Left cardiac atrium (tissue), 4 donors: ENCODE measurements at regions of chr15 and their contacts with region 1.

Region 1: DNA sequence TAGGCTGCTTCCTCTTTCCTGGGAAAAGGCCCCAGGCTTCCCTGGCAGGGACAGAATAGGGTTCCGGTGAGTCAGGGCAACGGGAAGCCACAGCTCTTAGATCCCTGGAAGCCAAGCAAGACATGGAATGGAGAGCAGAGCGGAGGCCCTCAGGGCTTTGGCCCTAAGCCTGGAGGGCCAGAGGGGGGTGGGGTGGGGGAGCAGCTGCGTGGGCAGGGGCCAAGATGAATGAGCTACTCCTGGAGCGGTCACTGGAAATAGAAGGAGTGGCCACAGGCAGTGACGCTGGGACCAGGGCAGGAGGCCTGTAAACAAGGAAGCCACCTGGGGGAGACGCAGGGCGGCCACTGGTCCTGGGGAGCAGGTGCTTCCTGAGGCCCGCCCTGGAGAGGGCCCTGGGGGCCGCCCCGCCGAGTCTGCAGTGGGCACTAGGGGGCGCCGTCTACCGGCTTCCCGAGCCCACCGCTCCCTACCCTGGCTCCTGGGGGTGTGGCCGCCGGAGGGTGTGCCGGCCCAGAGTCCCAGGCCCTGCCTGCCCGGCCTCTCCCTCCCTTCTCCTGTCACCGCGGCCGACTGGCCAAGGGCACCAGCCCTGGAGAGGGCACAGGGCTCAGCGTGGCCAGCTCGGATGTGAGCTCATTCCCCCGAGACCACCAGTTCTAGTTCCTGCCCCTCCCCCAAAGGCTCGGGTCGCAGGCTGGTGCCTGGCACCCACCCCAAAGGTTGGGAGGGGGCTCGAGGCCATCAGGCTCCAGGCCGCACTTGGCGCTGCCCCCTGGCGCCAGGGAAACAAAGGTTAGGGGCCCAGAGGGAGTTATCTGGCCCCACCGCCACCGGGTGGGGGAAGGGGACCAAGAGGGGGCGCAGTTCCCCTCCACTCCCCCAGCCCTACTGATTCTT is 12.1 kb downstream of the VPS18 start:
- DNase-seq: peak; percentile 91
- ATAC-seq: peak; percentile 80 to 85

Region 2: DNA sequence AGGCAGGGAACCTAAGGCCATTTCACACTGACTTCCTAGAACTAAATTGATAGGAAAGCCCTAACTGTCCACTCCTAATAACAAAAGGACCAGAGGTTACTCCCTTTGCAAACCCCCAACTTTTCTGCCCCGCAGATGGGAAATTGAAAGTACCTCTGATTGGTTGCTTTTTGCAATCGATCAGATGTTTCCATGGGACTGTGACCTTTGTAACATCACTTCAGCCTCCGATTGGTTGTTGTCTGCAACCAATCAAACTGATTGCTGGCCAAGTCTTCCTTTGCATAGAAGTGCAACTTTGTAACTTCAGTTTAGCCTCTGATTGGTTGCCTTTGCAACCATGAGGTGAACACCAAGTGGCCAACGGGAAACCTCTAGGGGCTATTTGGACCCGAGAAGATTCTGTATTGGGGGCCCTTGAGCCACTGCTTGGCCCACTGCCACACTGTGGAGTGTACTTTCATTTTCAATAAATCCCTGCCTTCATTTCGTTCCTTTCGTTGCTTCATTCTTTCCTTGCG is 323.6 kb before region 1 on chr15:
- intact Hi-C with region 1: no loop called
- DNase-seq: no peak
- ATAC-seq: peak in 1 of 2 donors; percentile 59

Region 3: GRCh38 chr15:40941528-40942336 is 35.4 kb after region 1 on chr15:
- intact Hi-C with region 1: loop called in 1 of 2 experiments (anchors 5 kb)
- DNase-seq: peak; percentile 85
- ATAC-seq: peak; percentile 84 to 85

Region 4: DNA sequence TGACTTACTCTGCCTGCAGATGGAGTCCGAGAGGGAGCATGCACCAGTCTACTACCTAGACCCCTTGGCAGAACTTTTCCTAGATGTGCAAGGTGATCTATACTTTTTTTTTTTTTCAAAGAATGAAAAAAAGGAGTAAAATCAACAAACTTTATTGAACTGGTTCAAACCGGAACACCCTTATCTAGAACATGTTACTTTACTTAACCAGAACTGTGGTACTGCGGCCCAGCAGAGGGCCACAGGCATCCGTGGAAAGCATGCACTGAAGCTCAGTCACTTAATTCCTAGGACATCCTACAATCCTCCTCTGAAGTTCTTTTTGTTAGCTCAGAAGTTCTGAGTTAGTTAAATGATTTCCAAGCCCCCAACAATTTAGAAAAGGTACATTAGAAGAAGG is 68.5 kb after region 1 on chr15:
- intact Hi-C with region 1: no loop called
- DNase-seq: no peak
- ATAC-seq: no peak

Region 5: DNA sequence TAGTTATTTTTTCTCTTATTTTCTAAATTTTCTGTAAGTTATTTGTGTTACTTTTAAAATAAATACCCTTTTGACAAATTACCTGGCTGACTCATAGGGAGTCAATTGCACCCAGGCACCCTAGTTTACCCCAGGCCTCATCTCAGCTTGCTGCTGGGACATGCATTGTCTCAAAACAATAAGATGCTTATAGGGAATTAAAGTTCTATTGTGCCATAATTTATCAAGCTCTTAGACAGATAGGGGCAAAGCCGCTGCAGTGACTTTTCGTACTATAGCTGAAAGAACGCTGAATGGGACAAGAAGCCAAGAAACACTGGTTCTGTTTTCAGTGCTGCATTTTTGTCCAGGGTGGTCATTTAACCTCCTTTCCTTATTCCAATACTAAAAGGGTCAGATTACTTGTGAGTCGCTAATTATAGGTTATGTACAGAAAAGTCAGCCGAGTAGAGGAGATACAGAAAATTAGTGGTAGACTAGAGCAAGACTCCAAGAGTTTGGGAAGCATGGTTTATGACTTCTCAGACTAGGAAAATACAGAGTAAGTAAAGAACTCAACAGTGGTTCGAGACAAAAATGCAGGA is 274.0 kb after region 1 on chr15:
- intact Hi-C with region 1: loop called (anchors 2 to 10 kb)
- DNase-seq: no peak
- ATAC-seq: no peak